Heart left ventricle (tissue), 16 donors: ENCODE measurements at regions of chr5 and their contacts with region 1.

Region 1: GRCh38 chr5:177006265-177006972 is at the start of gene UIMC1:
- DNase-seq: peak; percentile 92 to 96 (median 92)
- ATAC-seq: peak; percentile 83 to 93 (median 92)
- H3K4me3 ChIP-seq: peak within 1 kb of the TSS; percentile 60 to 98 (median 92)
- H3K27ac ChIP-seq: peak within 1 kb of the TSS; percentile 88 to 98 (median 97)
- H3K4me1 ChIP-seq: peaks cover 0 to 26% (median 18%) of the 10 kb centered on the region in 12 donors
- H3K27me3 ChIP-seq: no peaks in the 10 kb centered on the region
- CTCF ChIP-seq: no peak
- POLR2A ChIP-seq: peak in 1 of 2 donors; percentile 44
- total RNA-seq, gene UIMC1: 22.6 to 40.2 (median 36.8) TPM

Region 2: GRCh38 chr5:176573564-176574296 is 432.7 kb before region 1 on chr5:
- intact Hi-C with region 1: no loop called
- DNase-seq: peak; percentile 59 to 85 (median 66)
- ATAC-seq: peak; percentile 53 to 89 (median 82)
- H3K4me3 ChIP-seq: no peak overlapping the region
- H3K27ac ChIP-seq: no peak overlapping the region
- H3K4me1 ChIP-seq: peaks cover 0 to 4% (median 0%) of the 10 kb centered on the region in 12 donors
- H3K27me3 ChIP-seq: peaks cover 0 to 13% (median 4%) of the 10 kb centered on the region in 9 donors
- CTCF ChIP-seq: peak; percentile 63 to 87 (median 80)
- POLR2A ChIP-seq: no peak

Region 3: GRCh38 chr5:177022384-177023308 is 16.2 kb after region 1 on chr5 and contains the start of gene ZNF346:
- intact Hi-C with region 1: loop called in 1 of 10 experiments (anchors 2 kb)
- DNase-seq: peak; percentile 91 to 95 (median 94)
- ATAC-seq: peak; percentile 93 to 96 (median 94)
- H3K4me3 ChIP-seq: peak within 1 kb of the TSS; percentile 66 to 95 (median 85)
- H3K27ac ChIP-seq: peak within 1 kb of the TSS; percentile 59 to 89 (median 84)
- H3K4me1 ChIP-seq: peaks cover 0 to 26% (median 12%) of the 10 kb centered on the region in 12 donors
- H3K27me3 ChIP-seq: no peaks in the 10 kb centered on the region
- CTCF ChIP-seq: peak; percentile 33 to 82 (median 63)
- POLR2A ChIP-seq: peak in 1 of 2 donors; percentile 62
- total RNA-seq, gene ZNF346: 6.5 to 11.9 (median 7.5) TPM